A673 (cell line): ENCODE measurements at regions of chr4 and their contacts with region 1.

Region 1: DNA sequence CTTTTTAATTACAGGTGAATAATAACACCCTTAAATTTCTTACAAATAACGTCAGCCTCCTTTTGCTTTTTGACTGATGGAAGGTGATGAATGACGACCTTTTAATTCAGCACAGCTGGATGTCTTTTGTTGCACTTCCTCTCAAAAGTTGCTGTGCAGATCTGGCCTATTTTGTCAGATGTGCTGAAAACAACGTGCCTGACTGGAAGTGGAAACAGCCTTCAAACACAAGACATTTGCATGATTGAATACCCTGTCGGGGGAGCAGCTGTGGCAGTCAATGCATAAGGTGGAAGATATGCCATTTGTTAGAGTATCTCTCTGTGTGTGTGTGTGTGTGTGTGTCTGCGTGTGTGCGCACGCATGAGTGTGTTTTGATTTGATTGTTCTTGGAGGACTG is 579.7 kb downstream of the SPRY1 start:
- DNase-seq: peak; percentile 93
- H3K4me3 ChIP-seq: no peak overlapping the region
- H3K27ac ChIP-seq: peak overlapping the region; percentile 21
- H3K4me1 ChIP-seq: peaks cover 34% of the 10 kb centered on the region
- H3K27me3 ChIP-seq: no peaks in the 10 kb centered on the region
- CTCF ChIP-seq: no peak

Region 2: DNA sequence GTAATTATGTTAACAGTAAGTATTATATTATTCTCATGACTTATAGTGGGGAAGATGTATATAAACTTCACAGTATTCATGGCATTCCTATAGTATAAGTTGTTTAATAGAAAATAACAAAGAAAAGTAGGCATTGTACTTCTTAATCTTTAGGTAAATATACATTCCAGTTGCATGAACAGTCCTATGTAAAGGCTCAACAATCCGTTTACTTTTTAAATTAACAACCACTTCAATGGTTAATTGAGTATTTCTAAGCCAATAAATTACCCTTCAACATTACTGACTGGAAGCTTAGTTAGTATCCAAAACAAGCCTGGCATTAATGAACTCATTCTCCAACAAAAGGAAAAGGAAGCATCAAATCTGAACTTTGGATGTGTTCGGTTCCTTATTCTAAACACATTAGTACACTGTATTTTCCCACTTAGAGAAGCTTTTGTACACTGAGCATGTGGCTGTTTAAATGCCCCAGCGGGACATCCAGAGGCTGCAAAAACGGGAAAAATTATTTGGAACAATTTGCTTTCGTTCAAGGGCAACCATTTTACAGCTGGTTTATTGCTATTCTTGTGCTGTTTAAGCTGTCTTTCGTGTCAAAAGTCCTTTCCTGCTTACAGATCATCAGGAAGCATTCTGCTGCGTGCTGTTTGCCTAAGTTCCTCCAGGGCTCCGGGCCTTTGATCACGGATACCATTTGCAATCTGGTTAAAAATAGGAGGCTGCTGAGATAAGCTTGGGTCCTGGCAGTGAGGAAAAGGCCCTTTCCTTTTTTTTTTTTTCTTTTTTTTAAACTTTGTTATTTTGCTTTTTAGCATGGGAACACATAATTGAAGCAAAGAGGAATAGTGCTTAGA is 119.4 kb before region 1 on chr4:
- CTCF ChIA-PET with region 1: no interaction called
- POLR2A ChIA-PET with region 1: no interaction called
- intact Hi-C with region 1: loop called (anchors 5 kb)
- DNase-seq: peak; percentile 91
- H3K4me3 ChIP-seq: no peak overlapping the region
- H3K27ac ChIP-seq: no peak overlapping the region
- H3K4me1 ChIP-seq: peaks cover 13% of the 10 kb centered on the region
- H3K27me3 ChIP-seq: peaks cover 21% of the 10 kb centered on the region
- CTCF ChIP-seq: 0 out of 2 replicates have a peak, but pooled peaks have one; percentile 10